ENCODE measurements at regions of chr3 and their contacts with region 1.

Region 1: DNA sequence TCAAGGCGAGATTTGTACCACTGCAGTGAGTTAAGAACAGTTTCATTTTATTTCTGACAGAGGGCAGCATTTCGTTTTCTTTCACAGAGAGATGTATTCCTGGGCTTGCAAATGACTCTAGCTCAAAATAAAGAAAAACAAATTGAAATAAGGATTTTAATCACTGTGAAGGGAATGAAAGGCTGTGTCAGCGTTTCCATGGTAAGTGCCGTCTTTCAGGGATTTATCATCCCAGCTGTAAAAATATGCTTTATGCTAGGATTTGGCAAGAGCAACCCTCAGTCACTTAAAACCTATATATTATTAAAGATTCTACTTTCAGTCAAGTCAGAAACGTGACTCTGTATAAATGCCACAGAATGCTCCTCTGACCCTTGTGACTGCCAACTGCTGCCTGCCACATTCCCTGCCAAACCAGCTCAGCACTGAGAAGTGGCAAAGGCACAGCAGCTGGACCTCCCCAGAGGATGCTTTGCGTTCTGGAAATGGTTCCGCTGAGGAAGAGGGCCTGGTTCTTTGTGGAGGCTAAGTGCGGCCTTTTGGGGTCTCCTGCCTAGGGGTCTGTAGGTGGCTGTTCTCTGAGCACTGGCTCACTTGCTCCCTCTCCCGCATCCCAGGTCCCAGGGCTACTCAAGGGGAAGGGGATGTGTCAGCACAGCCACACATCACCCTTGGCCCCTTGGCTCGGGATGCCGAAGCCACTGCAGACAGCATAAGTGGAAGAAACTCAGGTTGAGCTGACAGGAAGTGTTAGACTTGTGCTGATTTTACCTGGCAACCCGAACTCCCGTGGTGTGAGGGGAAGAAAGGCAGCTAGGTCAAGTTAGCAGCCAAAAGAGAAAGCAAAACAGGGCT is 56.6 kb upstream of the POMGNT2 start:
- DNase-seq: no peak
- ATAC-seq: peak; percentile 25 to 91 (median 80)
- H3K4me3 ChIP-seq: peak overlapping the region in 6 of 10 donors; percentile 15 to 24 (median 19)
- H3K27ac ChIP-seq: peak overlapping the region in 8 of 10 donors; percentile 3 to 81 (median 63)
- H3K4me1 ChIP-seq: peaks cover 0 to 20% (median 12%) of the 10 kb centered on the region in 9 donors
- H3K27me3 ChIP-seq: no peaks in the 10 kb centered on the region
- CTCF ChIP-seq: peak; percentile 20 to 75 (median 57)

Region 2: DNA sequence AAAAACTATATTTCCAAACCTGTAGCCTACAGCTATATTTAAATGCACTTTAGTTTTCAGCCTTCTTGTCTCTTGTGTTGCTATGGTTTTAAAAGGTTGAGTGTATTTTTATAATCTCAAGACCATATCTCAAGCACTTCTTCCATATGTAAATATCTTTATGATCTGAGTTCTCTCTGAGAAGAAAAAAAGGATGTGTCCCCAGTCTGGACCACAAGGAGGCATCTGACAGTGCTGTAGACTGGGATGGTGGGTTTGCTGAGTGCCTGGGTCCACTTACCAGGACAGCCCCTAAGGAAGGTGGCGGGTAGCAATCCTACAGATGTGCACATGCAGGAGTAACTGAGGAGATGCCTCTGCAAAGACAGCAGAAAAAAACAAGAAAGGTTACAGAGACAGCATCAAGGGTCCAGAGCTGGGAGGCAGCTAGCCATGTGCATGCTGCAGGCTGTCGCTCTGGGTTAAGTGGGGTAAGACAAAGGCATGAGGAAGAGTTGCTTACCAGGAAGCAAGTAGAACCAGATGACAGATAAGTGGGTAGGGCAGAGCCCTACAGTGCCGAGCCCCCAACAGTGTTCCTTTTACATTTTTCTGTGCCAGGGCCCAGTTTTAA is 53.3 kb after region 1 on chr3:
- intact Hi-C with region 1: loop called in 1 of 10 experiments (anchors 10 kb)
- DNase-seq: no peak
- ATAC-seq: no peak
- H3K4me3 ChIP-seq: no peak overlapping the region
- H3K27ac ChIP-seq: no peak overlapping the region
- H3K4me1 ChIP-seq: peaks cover 0 to 24% (median 11%) of the 10 kb centered on the region in 9 donors
- H3K27me3 ChIP-seq: no peaks in the 10 kb centered on the region
- CTCF ChIP-seq: peak in 2 of 9 donors; percentile 15 to 17

Region 3: DNA sequence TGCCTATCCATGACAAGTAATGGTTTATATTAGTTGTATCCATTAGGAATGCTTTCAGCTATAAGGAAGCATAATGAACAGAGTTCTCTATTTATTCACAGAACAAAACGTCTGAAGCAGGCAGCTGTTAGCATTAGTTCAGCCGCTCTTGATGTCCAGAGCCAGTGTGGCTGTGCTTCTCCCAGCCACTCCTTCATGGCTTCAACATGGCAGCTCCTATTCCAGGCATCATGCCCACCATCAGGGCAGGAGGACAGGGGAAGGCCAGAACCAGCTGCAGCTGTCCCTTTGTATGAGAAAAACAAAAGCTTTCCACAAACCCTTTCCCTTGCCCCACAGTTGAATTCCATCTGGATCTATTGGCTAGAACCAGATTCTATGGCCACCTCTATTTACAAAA is 111.0 kb after region 1 on chr3:
- intact Hi-C with region 1: loop called in 1 of 10 experiments (anchors 10 kb)
- DNase-seq: no peak
- ATAC-seq: no peak
- H3K4me3 ChIP-seq: no peak overlapping the region
- H3K27ac ChIP-seq: no peak overlapping the region
- H3K4me1 ChIP-seq: no peaks in the 10 kb centered on the region
- H3K27me3 ChIP-seq: no peaks in the 10 kb centered on the region
- CTCF ChIP-seq: no peak

Region 4: DNA sequence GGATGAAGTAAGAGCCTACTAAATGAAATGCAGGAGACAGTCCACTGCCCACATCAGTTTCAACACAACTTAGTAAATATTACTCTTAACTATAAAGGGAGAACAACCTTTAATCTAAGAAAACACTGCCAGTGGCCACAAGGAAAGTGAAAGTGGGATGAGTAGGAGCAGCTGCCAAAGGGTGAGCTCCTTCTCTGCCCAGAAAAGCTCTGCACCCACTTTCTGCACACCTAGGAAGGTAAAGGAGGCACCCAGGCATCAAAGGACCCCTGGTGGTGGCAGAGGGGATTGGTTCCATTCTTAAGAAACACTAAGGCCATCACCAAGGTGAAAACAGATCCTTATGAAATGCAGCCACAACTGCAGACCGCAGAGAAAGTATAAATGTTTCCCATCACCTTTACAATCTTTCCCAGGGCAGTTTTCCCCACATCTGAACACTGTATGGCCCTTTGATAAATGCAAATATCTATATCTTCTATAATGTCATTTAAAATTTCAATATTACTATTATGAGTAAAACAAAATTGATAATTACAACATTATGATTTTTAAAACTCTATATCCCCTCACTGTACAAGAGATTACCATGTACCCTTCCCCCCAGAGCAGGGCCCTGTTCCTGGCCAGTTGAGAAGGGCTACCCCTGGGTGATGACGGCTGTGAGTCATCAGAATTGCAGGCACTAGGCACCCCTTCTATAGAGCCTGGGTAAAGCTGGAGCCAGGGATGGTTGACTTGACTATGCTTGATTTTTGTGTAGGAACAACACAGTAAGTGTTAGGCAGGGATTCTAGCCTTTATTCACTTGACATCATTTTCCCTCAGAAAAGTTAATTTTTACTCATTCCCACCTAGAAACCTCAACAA is 215.8 kb after region 1 on chr3:
- intact Hi-C with region 1: loop called in 5 of 10 experiments (anchors 5 to 10 kb)
- DNase-seq: no peak
- ATAC-seq: peak in 5 of 8 donors; percentile 25 to 48 (median 44)
- H3K4me3 ChIP-seq: no peak overlapping the region
- H3K27ac ChIP-seq: peak overlapping the region in 4 of 10 donors; percentile 2 to 47 (median 20)
- H3K4me1 ChIP-seq: peaks cover 0 to 26% (median 16%) of the 10 kb centered on the region in 9 donors
- H3K27me3 ChIP-seq: no peaks in the 10 kb centered on the region
- CTCF ChIP-seq: peak; percentile 21 to 69 (median 57)